ENCODE measurements at regions of chr13 and their contacts with region 1.

Region 1: GRCh38 chr13:24053519-24054251 is 106.8 kb upstream of the SPATA13 start:
- DNase-seq: peak; percentile 24 to 70 (median 61)
- ATAC-seq: peak; percentile 91
- H3K4me3 ChIP-seq: no peak overlapping the region
- H3K4me3 Mint-ChIP-seq: no peak overlapping the region
- H3K27ac ChIP-seq: no peak overlapping the region
- H3K27ac Mint-ChIP-seq: peak overlapping the region in 5 of 9 donors; percentile 21 to 68 (median 24)
- H3K4me1 ChIP-seq: no peaks in the 10 kb centered on the region
- H3K4me1 Mint-ChIP-seq: peaks cover 0 to 12% (median 9%) of the 10 kb centered on the region in 7 donors
- H3K27me3 ChIP-seq: no peaks in the 10 kb centered on the region
- H3K27me3 Mint-ChIP-seq: peaks cover 3 to 22% (median 7%) of the 10 kb centered on the region in 5 donors

Region 2: DNA sequence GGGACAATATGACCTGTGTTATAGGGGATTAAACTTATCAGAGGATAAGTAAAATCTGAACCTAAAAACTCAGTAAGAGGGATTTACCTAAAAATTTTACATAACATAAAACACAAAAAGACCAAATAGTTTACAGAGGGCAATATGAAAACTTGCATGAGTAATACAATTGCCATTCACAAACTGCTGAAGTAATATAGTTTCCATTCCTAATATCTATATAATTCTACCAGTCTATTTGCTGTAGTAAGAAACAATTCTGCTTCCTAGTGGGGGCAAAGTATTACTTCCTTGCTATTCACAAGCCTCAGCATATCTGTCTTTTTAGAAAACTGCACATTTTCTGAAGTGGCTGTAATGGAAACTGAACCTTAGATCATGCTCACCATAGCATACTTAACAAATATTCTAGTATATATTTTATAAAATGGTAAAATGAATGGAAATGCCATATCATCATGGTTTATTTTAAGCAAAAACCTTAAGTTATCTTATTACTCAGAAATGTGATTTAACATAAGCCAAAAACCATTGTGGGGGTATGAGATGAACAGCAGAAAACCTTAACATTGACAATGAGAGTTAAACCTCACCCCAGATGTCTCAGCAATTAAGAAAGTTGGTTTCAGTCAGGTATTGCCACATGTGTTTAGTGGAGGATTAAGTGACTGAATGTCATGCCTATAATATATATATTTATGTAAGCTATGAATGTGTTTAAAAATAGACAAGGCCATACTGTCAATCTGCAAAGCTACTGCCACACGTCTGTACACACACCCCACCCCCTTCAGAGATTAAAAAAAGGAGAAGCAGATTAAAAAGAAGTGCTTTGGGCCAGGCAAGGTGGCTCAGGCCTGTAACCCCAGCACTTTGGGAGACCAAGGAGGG is 301.3 kb before region 1 on chr13:
- CTCF ChIA-PET with region 1: no interaction called
- POLR2A ChIA-PET with region 1: no interaction called
- intact Hi-C with region 1: no loop called
- DNase-seq: no peak
- ATAC-seq: no peak
- H3K4me3 ChIP-seq: no peak overlapping the region
- H3K4me3 Mint-ChIP-seq: no peak overlapping the region
- H3K27ac ChIP-seq: no peak overlapping the region
- H3K27ac Mint-ChIP-seq: peak overlapping the region in 1 of 9 donors; percentile 87
- H3K4me1 ChIP-seq: peaks cover 0 to 5% of the 10 kb centered on the region in 2 donors
- H3K4me1 Mint-ChIP-seq: peaks cover 10 to 30% (median 16%) of the 10 kb centered on the region in 7 donors
- H3K27me3 ChIP-seq: no peaks in the 10 kb centered on the region
- H3K27me3 Mint-ChIP-seq: peaks cover 0 to 5% (median 0%) of the 10 kb centered on the region in 5 donors

Region 3: GRCh38 chr13:24020375-24020830 is 33.3 kb before region 1 on chr13:
- CTCF ChIA-PET with region 1: no interaction called
- POLR2A ChIA-PET with region 1: no interaction called
- intact Hi-C with region 1: loop called in 1 of 2 experiments (anchors 1 kb)
- DNase-seq: peak in 6 of 9 donors; percentile 11 to 33 (median 21)
- ATAC-seq: no peak
- H3K4me3 ChIP-seq: no peak overlapping the region
- H3K4me3 Mint-ChIP-seq: no peak overlapping the region
- H3K27ac ChIP-seq: no peak overlapping the region
- H3K27ac Mint-ChIP-seq: no peak overlapping the region
- H3K4me1 ChIP-seq: no peaks in the 10 kb centered on the region
- H3K4me1 Mint-ChIP-seq: peaks cover 0 to 4% (median 0%) of the 10 kb centered on the region in 7 donors
- H3K27me3 ChIP-seq: no peaks in the 10 kb centered on the region
- H3K27me3 Mint-ChIP-seq: peaks cover 0 to 4% (median 0%) of the 10 kb centered on the region in 5 donors

Region 4: DNA sequence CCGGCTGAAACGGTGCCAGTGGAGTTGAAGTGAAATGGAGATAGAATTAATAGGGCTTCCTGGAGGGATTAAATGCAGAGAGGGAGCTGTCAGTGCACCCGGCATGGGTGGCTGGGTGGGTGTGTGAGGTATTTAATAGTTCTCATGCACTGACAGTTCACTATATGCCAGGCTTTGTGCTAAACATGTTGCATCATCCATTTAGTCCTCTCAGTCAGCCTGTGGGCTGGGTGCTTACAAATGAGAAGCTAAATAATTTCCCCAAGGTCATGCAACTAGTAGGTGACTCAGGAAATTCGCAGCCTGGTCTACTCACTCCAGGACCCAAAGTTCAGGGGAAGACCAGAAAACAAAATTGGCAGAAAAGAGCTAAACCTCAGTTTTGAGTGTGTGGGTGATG is 43.4 kb after region 1 on chr13:
- CTCF ChIA-PET with region 1: interaction called, 3 read pairs
- POLR2A ChIA-PET with region 1: no interaction called
- intact Hi-C with region 1: loop called in 1 of 2 experiments (anchors 1 kb)
- DNase-seq: peak in 1 of 9 donors; percentile 53
- ATAC-seq: no peak
- H3K4me3 ChIP-seq: no peak overlapping the region
- H3K4me3 Mint-ChIP-seq: peak overlapping the region in 7 of 10 donors; percentile 13 to 78 (median 60)
- H3K27ac ChIP-seq: no peak overlapping the region
- H3K27ac Mint-ChIP-seq: peak overlapping the region in 3 of 9 donors; percentile 41 to 73 (median 71)
- H3K4me1 ChIP-seq: peaks cover 0 to 10% of the 10 kb centered on the region in 2 donors
- H3K4me1 Mint-ChIP-seq: peaks cover 10 to 22% (median 18%) of the 10 kb centered on the region in 7 donors
- H3K27me3 ChIP-seq: no peaks in the 10 kb centered on the region
- H3K27me3 Mint-ChIP-seq: peaks cover 0 to 27% (median 0%) of the 10 kb centered on the region in 5 donors

Measured in naive thymus-derived CD4-positive, alpha-beta T cell (primary cell).